ENCODE measurements at regions of chr2 and their contacts with region 1.

Region 1: GRCh38 chr2:105231232-105231619 is 10.3 kb upstream of the GPR45 start:
- DNase-seq: no peak
- CTCF ChIP-seq: no peak

Region 2: DNA sequence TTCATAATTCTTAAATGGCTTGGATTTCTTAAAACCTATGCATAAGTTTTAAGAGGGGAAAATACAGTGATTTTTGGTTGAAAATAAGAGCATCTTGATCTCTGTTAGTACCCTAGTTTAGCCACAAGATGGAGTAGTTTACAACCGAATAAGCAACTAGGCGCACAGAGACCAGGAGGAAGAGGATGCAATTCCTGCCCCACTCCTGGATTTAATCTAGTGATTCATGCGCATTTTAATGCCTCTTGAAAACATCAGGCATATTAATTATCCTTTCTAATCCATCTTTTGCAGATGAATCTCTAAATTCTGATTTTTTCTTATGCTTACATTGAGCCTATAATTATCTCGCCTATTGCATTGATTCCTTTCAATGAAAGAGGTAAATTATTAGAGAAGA is 116.7 kb before region 1 on chr2:
- in situ Hi-C with region 1: loop called (anchors 5 kb)
- DNase-seq: peak; percentile 81
- CTCF ChIP-seq: peak; percentile 71

Measured in GM13977 (cell line).